Activated CD4-positive, alpha-beta memory T cell treated with anti-CD3 and anti-CD28 coated beads for 36 hours (primary cell): ENCODE measurements at regions of chrX and their contacts with region 1.

Region 1: GRCh38 chrX:79146640-79147390 is 2.3 kb downstream of the GPR174 start:
- DNase-seq: peak; percentile 10
- H3K4me3 Mint-ChIP-seq: peak overlapping the region; percentile 93
- H3K27ac Mint-ChIP-seq: peak overlapping the region; percentile 95
- H3K4me1 Mint-ChIP-seq: peaks cover 35% of the 10 kb centered on the region
- H3K27me3 Mint-ChIP-seq: no peaks in the 10 kb centered on the region

Region 2: GRCh38 chrX:79081895-79082512 is 64.8 kb before region 1 on chrX:
- CTCF ChIA-PET with region 1: no interaction called
- POLR2A ChIA-PET with region 1: no interaction called
- intact Hi-C with region 1: loop called (anchors 1 kb)
- DNase-seq: peak; percentile 30
- H3K4me3 Mint-ChIP-seq: peak overlapping the region; percentile 69
- H3K27ac Mint-ChIP-seq: peak overlapping the region; percentile 79
- H3K4me1 Mint-ChIP-seq: peaks cover 41% of the 10 kb centered on the region
- H3K27me3 Mint-ChIP-seq: no peaks in the 10 kb centered on the region

Region 3: DNA sequence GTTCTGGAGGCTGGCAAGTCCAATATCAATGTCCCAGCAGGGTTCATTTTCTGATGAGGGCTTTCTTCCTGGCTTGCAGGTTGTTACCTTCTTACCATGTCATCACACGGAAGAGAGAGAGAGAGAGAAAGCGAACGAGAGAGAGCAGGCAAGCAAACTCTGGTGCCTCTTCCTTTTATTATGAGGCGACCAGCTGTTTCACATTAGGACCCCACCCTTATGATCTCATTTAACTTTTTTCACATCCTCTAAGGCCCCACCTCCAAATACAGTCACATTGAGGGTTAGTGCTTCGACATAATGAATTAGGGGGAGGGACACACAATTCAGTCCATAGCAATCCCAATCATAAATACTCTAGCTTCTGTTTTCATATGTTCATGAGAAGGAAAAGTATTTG is 12.9 kb before region 1 on chrX:
- CTCF ChIA-PET with region 1: no interaction called
- POLR2A ChIA-PET with region 1: no interaction called
- intact Hi-C with region 1: loop called (anchors 1 kb)
- DNase-seq: peak; percentile 28
- H3K4me3 Mint-ChIP-seq: peak overlapping the region; percentile 32
- H3K27ac Mint-ChIP-seq: peak overlapping the region; percentile 66
- H3K4me1 Mint-ChIP-seq: peaks cover 28% of the 10 kb centered on the region
- H3K27me3 Mint-ChIP-seq: no peaks in the 10 kb centered on the region

Region 4: DNA sequence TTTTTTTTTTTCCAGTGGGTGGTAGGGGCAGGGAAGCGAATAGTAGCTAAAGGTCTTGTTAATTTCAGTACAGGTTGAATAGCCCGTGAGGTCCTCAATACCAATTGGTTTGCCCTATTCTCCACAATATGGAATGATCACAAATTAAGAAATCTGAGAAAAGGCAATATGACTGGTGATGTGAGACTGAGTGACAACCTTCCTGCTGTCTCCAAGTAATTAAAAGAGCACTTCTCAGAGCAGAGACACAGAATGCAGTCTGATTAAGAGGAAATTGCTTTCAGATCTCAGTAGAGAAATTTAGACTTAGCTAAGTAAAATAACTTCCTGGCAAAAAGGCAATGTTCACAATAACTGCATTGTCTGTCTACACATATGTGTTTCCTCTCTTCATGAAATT is 20.6 kb after region 1 on chrX:
- CTCF ChIA-PET with region 1: interaction called, 4 read pairs
- POLR2A ChIA-PET with region 1: interaction called, 57 read pairs
- intact Hi-C with region 1: loop called (anchors 1 kb)
- DNase-seq: no peak
- H3K4me3 Mint-ChIP-seq: peak overlapping the region; percentile 66
- H3K27ac Mint-ChIP-seq: peak overlapping the region; percentile 96
- H3K4me1 Mint-ChIP-seq: peaks cover 75% of the 10 kb centered on the region
- H3K27me3 Mint-ChIP-seq: no peaks in the 10 kb centered on the region

Region 5: GRCh38 chrX:79366873-79367749 is 220.3 kb after region 1 on chrX and contains the start of gene ITM2A:
- CTCF ChIA-PET with region 1: no interaction called
- POLR2A ChIA-PET with region 1: interaction called, 8 read pairs
- intact Hi-C with region 1: loop called (anchors 2 kb)
- DNase-seq: peak; percentile 75
- H3K4me3 Mint-ChIP-seq: peak within 1 kb of the TSS; percentile 95
- H3K27ac Mint-ChIP-seq: peak within 1 kb of the TSS; percentile 95
- H3K4me1 Mint-ChIP-seq: peaks cover 24% of the 10 kb centered on the region
- H3K27me3 Mint-ChIP-seq: no peaks in the 10 kb centered on the region
- total RNA-seq, gene ITM2A: 87.7 to 98.1 TPM